ENCODE measurements at regions of chr20 and their contacts with region 1.

Region 1: DNA sequence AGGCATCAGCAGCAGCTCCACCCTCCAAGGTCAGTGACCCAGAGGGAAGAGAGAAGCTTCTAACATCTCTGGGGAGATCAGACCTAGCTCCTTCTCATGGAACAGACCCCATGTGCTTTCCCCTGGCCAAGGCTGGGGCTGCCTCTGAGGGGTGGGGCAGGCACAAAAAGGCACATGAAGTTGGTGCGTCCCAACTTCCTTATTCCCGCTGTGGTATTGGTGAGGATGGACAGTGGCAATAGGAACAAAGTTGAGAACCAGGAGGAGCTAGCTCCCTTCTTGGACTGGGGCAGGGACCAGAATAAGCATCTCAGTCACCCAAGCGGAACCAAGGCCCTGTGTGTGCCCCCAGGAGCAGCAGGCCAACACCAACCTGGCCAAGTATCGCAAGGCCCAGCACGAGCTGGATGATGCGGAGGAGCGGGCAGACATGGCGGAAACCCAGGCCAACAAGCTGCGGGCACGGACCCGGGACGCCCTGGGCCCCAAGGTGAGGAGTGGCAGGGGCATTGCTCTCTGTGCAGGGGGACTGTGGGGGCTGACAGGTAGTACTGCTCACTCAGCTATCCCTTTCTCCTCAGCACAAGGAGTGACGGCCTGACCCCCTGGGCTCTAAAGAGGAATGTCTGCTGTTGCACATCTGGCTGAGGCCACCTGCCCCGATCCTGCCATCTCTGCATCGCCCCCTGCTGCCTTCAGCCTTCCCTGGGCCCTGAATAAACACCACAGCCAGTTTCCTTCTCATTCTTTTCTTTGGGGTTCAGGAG is 46.1 kb downstream of the MYH7B start:
- DNase-seq: no peak
- H3K4me3 ChIP-seq: no peak overlapping the region
- H3K27ac ChIP-seq: no peak overlapping the region
- H3K4me1 ChIP-seq: peaks cover 0 to 2% (median 0%) of the 10 kb centered on the region in 4 experiments; a peak in 2 of 7 replicates
- H3K27me3 ChIP-seq: no peaks in the 10 kb centered on the region
- CTCF ChIP-seq: peak; percentile 48 to 57 (median 49)
- EP300 ChIP-seq: no peak
- POLR2A ChIP-seq: no peak
- RAD21 ChIP-seq: peak; percentile 54 to 61

Region 2: DNA sequence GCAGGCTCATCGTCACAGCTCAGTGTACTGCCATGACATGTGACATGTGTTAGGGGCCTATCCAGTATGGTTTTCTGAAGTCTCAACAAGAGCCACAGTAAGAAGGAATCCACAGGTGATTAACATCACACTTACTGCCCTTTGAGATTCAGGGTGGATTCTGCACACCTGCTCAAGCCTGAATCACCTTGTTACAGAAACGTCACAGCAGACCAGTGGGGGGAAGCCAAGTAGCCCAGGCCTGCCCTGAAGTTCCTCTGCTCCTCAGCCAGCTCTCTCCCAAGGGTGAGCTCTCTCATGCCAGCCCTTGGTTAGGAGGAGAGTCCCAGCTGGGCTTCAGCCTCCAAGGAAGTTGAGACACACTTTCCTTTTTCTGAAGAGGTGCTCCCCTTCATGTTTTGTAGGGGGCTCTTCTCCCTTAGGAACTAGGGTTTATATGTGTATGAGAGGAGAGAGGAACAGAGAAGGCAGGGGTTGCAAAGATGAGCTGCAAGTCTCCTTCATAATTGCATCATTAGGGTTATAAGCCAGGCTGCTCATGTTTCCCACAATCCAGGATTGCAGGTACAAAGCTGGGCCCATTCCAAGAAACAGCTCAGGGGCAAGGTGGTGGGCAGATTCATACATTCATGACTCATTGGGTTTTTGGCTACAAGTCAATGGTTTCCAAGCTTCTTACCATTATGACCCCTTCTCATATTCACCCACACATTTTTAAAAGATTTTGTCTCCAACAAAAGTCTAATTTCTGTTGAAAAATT is 57.8 kb before region 1 on chr20:
- CTCF ChIA-PET with region 1: interaction called, 11 read pairs
- POLR2A ChIA-PET with region 1: no interaction called
- DNase-seq: no peak
- H3K4me3 ChIP-seq: no peak overlapping the region
- H3K27ac ChIP-seq: no peak overlapping the region
- H3K4me1 ChIP-seq: no peaks in the 10 kb centered on the region
- H3K27me3 ChIP-seq: no peaks in the 10 kb centered on the region
- CTCF ChIP-seq: no peak
- EP300 ChIP-seq: no peak
- POLR2A ChIP-seq: no peak
- RAD21 ChIP-seq: no peak

Region 3: GRCh38 chr20:34955232-34956040 is 46.3 kb before region 1 on chr20 and contains the starts of genes GSS and MYH7B:
- CTCF ChIA-PET with region 1: interaction called, 20 read pairs
- POLR2A ChIA-PET with region 1: interaction called, 4 read pairs
- DNase-seq: peak; percentile 96 to 100
- H3K4me3 ChIP-seq: peak within 1 kb of the TSS; percentile 64 to 91 (median 74)
- H3K27ac ChIP-seq: peak within 1 kb of the TSS; percentile 35; the same call in 1 of the 2 replicates
- H3K4me1 ChIP-seq: peaks cover 0 to 12% (median under 1%) of the 10 kb centered on the region in 4 experiments; a peak in 3 of 7 replicates
- H3K27me3 ChIP-seq: peaks cover 0 to 5% (median 1%) of the 10 kb centered on the region in 4 experiments; a peak in 3 of 7 replicates
- CTCF ChIP-seq: peak; percentile 46 to 59 (median 55); a peak in 3 of 4 replicates
- EP300 ChIP-seq: 0 out of 3 replicates have a peak, but pooled peaks of 1 of the 2 experiments have one; percentile 5
- POLR2A ChIP-seq: peak; percentile 56 to 70; a peak in 2 of 3 replicates
- RAD21 ChIP-seq: peak; percentile 60 to 63
- total RNA-seq, gene GSS: 29.4 and 34.6 TPM in 2 replicates
- total RNA-seq, gene MYH7B: 0.30 and 0.69 TPM in 2 replicates

Region 4: GRCh38 chr20:34970193-34970840 is 31.5 kb before region 1 on chr20:
- CTCF ChIA-PET with region 1: interaction called, 26 read pairs
- POLR2A ChIA-PET with region 1: no interaction called
- DNase-seq: no peak
- H3K4me3 ChIP-seq: no peak overlapping the region
- H3K27ac ChIP-seq: no peak overlapping the region
- H3K4me1 ChIP-seq: no peaks in the 10 kb centered on the region; a peak in 3 of 7 replicates
- H3K27me3 ChIP-seq: no peaks in the 10 kb centered on the region
- CTCF ChIP-seq: no peak
- EP300 ChIP-seq: no peak
- POLR2A ChIP-seq: no peak
- RAD21 ChIP-seq: no peak

Region 5: GRCh38 chr20:34983995-34984735 is 17.6 kb before region 1 on chr20:
- CTCF ChIA-PET with region 1: interaction called, 16 read pairs
- POLR2A ChIA-PET with region 1: interaction called, 7 read pairs
- DNase-seq: peak; percentile 65 to 86
- H3K4me3 ChIP-seq: peak overlapping the region in 2 of 4 experiments; percentile 5 to 29; a peak in 2 of 8 replicates
- H3K27ac ChIP-seq: no peak overlapping the region
- H3K4me1 ChIP-seq: peaks cover 0 to 43% (median 27%) of the 10 kb centered on the region in 4 experiments; a peak in 6 of 7 replicates
- H3K27me3 ChIP-seq: peaks cover 0 to 16% (median 9%) of the 10 kb centered on the region in 4 experiments; a peak in 3 of 7 replicates
- CTCF ChIP-seq: no peak
- EP300 ChIP-seq: peak in 1 of 2 experiments; percentile 84; a peak in 1 of 3 replicates
- POLR2A ChIP-seq: no peak
- RAD21 ChIP-seq: 0 out of 4 replicates have a peak, but pooled peaks of 1 of the 2 experiments have one; percentile 4

Region 6: DNA sequence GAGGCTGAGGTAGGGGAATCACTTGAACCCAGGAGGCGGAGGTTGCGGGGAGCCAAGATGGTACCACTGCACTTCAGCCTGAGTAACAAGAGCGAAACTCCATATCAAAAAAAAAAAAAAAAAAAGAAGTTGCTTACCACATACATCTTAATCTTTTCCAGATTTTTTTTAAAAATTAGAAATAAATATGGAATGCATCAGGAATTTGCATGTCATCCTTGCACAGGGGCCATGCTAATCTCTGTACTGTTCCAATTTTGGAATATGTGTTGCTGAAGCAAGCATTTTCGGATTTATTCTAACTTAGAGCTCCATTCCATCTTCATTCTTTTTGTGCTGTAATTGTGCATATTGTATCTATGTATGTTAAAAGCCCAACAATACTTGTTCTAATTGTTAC is 28.4 kb after region 1 on chr20:
- CTCF ChIA-PET with region 1: no interaction called
- POLR2A ChIA-PET with region 1: no interaction called
- DNase-seq: no peak
- H3K4me3 ChIP-seq: no peak overlapping the region
- H3K27ac ChIP-seq: no peak overlapping the region
- H3K4me1 ChIP-seq: no peaks in the 10 kb centered on the region
- H3K27me3 ChIP-seq: no peaks in the 10 kb centered on the region
- CTCF ChIP-seq: no peak
- EP300 ChIP-seq: no peak
- POLR2A ChIP-seq: no peak
- RAD21 ChIP-seq: no peak

Measured in H1 (cell line).